Posterior vena cava (tissue), 2 donors: ENCODE measurements at regions of chr16 and their contacts with region 1.

Region 1: GRCh38 chr16:69424053-69424934 is at the start of gene CYB5B:
- DNase-seq: peak; percentile 96
- total RNA-seq, gene CYB5B: 47.3 to 59.3 TPM

Region 2: DNA sequence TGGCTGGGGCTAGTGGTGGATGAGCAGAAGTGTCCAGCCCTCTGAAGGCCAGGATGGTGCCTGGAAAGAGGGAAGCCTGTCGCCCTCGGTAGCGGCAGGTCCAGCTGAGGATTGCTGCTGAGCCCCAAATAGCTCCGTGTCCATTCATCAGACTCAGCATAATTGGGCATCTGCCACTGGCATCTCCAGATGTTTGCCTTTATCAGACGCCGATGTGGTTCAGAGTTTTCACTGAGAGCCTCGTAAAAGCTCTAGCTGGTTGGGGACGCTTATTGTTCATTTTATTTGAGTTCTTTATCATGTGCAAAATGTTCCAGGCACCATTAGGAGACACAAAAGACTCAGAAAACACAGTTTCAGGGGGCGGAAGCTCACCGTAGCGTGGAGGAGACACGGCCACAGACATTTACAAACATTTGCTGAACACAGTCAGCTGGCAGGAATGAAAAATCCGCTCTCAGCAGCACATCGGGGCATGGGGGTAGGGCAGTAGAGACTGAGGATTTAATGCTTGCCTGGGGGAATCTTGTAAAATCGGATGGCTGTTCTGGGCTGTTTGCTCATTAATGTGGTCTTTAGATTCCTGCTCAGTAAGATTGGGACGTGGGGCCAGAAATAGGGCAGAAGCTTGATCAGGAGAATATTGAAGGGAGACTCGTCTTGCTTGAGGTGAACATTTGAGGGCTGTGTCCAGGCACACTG is 1017.7 kb before region 1 on chr16:
- intact Hi-C with region 1: no loop called
- DNase-seq: peak; percentile 60

Region 3: DNA sequence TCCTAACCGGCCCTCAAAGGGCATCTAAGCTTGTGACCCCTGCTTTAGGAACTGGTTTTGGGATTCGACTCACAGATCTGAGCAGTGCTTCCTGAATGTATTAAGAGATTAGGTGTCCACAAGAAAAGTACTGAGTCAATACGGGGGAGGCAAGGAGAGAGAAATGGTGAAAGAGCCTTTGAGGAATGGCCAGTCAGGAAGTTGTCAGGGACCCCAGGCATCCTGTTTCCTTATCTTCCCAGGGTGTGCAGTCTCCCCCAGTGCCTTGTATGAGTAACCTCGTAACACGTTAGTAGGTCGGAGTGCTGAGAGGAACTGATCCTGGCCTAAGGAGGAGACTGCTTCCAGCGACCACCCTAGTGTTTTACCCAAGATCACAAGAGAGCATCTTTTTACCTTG is 56.3 kb before region 1 on chr16:
- intact Hi-C with region 1: no loop called
- DNase-seq: no peak

Region 4: GRCh38 chr16:69482410-69482991 is 58.2 kb after region 1 on chr16:
- intact Hi-C with region 1: loop called in 1 of 2 experiments (anchors 10 kb)
- DNase-seq: peak; percentile 88

Region 5: GRCh38 chr16:69554495-69554894 is 130.2 kb after region 1 on chr16:
- intact Hi-C with region 1: loop called in 1 of 2 experiments (anchors 10 kb)
- DNase-seq: no peak